ENCODE measurements at regions of chr17 and their contacts with region 1.

Region 1: DNA sequence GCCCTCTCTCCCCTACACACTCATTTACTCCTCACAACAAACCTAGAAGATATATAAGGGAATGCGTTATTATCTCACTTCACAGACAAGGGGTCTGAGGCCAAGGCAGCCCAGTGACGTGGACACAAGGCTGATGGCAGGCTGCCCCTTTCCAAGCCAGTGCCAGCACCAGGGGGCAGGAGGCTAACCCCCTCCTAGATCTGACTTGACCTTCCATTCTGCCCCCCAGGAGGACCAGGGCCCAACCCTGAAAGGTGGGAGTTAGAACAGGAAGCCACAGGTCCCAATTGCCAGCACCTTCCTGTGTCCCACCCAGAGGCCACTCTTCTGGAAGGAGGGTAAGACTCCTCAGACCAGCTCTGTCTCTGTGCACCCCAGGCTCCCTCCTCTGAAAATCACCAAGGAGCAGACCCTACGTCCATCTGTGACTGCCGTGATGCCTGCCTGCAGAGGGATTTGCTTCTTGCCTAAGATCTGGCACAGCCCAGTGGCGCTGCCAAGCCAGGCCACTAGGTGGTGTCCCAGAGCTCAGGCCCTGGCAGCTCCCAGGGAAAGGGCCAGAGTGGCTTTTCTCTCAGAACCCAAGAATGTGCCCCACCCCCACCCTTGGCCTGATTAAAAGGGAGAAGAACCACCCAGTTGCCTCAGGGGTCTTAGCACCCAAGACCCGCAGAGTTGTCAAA is 42.4 kb upstream of the MRPS23 start:
- DNase-seq: no peak
- H3K4me3 ChIP-seq: no peak overlapping the region; the same call in 1 of the 2 replicates
- CTCF ChIP-seq: peak; percentile 98

Region 2: GRCh38 chr17:57849874-57850754 is 42.2 kb before region 1 on chr17 and contains the start of gene MRPS23:
- CTCF ChIA-PET with region 1: interaction called, 11 read pairs
- POLR2A ChIA-PET with region 1: no interaction called
- DNase-seq: peak; percentile 95
- H3K4me3 ChIP-seq: peak within 1 kb of the TSS; percentile 99
- CTCF ChIP-seq: no peak

Region 3: DNA sequence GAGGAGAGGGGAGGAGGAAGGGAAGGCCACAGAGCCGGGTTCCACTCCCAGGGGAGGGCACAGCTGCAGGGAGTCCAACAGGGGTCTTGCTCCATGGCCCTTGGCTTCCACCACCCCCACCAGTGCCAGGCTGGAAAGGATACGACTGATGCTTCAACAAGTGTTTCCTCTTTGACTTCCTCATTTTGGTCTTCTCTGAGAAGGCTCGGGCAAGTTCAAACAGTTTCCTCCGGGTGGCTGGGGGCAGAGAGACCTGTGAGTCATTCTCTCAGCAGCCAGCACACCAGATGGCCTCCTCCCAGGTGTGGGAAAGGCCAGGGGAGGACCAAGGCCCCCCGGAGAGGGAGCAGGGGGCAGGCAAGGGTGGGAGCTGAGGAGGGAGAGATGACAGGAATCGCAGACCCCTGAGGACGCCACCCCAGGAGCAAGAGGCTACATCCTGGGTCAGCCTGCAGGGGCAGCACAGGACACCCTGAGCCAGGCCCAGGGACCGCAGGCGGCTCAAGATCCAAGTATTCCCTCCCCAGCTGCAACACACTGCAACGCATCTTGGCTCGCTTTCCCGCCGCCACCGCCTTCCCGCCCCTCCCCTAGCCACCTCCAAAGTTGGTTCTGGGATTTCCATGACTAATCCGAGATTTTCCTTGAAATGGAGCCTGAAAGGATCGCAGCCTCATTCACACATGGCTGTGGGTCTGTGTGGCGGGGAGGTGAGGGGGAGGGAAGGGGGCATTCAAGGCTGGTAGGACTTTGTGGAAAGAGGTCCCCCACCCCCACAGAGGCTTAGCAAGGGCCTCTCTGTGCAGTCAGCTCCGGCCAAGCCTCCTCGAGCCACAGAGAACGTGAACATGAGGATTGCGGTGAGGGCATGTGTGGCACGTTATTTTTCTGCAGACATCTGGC is 24.0 kb before region 1 on chr17:
- CTCF ChIA-PET with region 1: interaction called, 128 read pairs
- POLR2A ChIA-PET with region 1: interaction called, 4 read pairs
- DNase-seq: peak; percentile 44
- H3K4me3 ChIP-seq: no peak overlapping the region; the same call in 1 of the 2 replicates
- CTCF ChIP-seq: peak; percentile 64

Region 4: DNA sequence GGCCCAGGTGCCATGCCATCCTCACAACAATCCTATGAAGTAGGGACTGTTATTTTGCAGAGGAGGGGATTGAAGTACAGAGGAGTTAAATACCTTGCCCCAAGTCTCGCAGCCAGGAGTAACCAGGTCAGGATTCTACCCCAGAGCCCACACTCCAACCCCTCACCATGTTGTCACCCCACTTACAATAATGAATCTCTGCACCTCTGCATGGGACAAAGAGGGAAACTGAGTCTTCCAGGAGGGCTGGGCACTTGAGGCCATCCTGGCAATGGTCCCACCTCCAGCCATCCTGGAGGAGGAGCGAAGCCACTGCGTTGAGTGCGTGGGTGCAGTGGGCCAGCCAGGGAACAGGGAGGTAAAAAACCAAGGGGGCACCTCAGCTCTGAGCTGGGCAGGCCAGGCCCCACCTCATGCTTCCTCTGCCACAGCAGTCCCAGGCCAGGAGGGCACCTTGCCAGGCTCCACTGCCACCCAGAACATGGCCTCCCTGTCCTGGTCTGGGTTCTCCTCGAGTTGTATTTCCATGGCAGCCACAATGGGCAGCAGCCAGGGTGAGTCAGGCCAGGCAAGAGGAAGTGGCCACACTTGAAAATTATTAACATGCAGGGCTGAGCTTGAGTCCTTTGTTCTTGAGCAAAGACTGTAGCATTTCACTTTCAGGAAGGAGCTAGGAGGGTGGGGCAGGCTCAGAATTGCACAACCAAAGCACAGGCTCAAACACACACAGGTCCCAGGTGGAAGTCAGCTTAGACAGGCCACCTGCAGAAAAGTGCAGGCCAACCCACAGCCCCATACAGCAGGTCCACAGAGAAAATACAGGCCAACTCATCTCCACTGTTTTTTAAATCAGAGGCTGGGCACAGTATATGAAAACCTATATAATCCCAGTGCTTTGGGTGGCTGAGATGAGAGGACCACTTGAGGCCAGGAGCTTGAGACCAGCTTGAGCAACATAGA is 10.8 kb after region 1 on chr17:
- CTCF ChIA-PET with region 1: interaction called, 30 read pairs
- POLR2A ChIA-PET with region 1: interaction called, 10 read pairs
- DNase-seq: no peak
- H3K4me3 ChIP-seq: no peak overlapping the region
- CTCF ChIP-seq: no peak

Region 5: DNA sequence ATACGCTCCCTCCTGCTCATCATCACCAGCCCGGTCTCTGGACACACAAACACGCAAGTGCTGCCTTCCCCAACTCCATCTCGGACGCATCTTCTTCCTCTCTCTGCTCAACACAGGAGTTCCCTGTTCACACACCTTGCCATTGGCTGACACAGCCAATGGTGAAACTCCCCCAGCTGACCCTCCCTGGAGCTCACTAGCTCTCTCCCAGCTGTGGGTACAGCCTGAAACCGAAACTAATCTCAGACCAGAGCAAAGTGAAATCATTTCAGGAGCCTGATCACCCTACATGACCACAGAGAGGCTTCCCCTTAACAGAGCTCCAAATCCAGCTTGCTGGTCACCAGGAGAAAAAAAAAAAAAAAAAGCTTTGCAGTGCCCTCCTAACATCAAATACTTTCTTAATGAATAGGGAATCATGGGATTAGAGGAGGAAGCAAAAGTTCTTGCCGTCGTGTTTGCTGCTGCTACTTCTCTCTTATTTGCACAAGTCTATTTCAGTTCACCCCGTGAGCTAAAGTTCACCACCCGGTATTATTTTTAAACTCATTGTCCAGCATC is 54.6 kb after region 1 on chr17:
- CTCF ChIA-PET with region 1: interaction called, 40 read pairs
- POLR2A ChIA-PET with region 1: interaction called, 16 read pairs
- DNase-seq: no peak
- H3K4me3 ChIP-seq: peak overlapping the region; percentile 51
- CTCF ChIP-seq: no peak

Region 6: DNA sequence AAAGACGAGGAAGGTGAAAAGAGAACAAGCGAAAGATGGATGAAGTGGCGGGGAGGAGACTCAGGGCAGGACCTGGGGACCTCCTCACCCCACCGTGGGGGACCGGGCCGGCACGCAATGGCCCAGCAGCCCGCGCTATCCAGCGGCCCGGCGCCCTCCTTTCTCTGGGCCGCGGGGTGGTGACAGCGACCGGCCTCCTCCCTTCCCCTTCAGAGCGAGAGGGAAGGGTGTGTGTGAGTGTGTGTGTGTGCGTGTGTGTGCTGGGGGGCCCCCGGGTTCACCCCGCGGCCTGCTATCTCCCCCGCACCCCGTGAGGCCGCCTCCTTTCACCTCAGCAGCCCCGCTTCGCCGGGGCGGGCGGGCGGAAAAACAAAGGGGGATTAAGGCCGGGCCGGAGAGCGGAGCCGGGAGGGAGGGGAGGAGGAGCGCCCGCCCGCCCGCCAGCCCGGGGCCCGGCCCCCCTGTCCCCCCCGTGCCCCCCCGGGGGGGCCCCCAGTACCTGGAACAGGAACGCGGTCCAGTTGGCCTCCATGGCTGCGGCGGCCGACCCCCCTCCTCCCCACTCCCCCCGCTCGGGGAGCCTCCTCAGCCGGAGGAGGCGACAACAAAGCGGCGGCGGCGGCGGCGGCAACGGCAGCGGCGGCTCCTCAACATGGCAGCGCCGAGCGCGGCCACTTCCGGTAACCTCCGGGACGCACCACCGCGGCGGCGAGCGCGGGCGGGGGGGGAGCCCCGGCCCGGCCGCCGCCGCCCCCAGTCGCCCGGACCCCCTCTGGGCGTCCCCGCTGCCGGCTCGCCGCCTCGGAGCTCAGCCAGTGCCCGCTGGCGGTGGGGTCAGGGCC is 95.5 kb after region 1 on chr17 and contains the start of gene VEZF1:
- CTCF ChIA-PET with region 1: interaction called, 15 read pairs
- POLR2A ChIA-PET with region 1: interaction called, 3 read pairs
- DNase-seq: no peak
- H3K4me3 ChIP-seq: peak within 1 kb of the TSS; percentile 80
- CTCF ChIP-seq: no peak

Measured in AG04449 (cell line).